AG04449 (cell line): ENCODE measurements at regions of chr2 and their contacts with region 1.

Region 1: DNA sequence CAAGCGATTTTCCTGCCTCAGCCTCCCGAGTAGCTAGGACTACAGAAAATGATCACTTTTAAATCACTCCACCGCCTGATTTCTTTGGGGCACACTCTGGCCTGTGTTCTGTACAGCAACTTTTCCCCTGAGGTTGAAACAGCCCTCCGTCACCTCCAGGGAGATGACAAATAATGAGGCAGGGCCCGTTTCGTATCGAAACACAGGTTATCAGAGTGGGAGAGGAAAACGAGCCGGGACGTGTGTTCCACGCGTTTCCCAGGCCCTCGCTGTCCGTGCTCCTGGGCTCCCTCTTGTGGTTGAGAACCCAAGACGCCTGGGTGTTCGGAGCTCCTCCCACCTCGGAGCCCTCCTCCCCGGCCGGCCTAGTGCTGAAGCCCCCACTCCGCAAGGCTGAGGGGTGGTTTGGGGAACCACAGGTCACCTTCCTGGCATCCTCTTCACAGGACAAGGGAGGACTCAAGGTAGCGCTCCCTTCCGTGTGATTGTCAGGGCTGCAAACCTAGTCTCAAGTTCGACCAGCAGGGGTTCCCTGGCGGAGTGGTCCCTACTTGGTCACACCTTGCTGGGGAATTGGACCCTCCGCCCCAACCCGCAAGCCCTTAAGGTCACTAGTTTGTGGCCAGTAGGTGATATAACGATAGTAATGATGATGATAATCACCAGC is 12.8 kb downstream of the ATP6V1B1 start:
- DNase-seq: no peak
- H3K4me3 ChIP-seq: peak overlapping the region; percentile 48
- CTCF ChIP-seq: peak; percentile 92

Region 2: GRCh38 chr2:70861777-70862625 is 86.5 kb before region 1 on chr2:
- CTCF ChIA-PET with region 1: interaction called, 299 read pairs
- POLR2A ChIA-PET with region 1: no interaction called
- DNase-seq: no peak
- H3K4me3 ChIP-seq: no peak overlapping the region
- CTCF ChIP-seq: peak; percentile 98

Region 3: DNA sequence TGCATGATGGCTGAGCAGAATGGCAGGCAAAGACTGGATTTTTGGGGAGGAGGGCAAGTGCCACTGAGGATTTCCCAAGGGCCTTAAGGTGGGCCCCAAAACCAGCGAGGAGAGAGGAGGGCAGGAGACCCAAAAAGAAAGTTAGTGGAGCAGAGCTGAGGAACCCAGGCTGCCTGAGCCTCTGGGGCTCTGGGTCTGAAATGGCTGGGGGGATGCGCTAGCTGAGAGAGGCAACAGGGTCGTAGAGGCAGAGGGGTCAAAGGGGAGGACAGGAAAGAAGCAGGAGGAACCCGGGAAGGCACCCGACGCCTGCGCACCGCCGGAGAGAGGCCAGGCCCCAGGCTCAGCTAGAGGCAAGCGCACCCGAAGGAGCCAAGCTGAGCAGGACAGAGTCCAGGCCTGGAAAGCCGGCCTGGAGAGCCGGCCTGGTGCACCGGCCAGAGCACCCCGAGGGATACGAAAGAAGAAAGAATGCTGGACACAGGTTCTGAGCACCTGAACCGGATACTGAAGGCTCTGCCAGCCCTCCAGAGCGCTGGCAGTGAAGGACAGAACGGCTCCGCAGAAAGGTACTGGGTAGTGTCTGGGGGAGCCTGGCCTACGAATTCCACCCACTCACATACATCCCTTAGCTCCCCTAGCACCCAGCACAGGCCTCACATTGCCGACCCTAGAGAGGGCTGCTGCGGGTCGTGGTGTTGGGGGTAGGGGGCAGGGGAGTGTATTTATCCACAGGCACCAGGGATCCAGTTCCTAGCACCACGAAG is 52.3 kb before region 1 on chr2:
- CTCF ChIA-PET with region 1: interaction called, 10 read pairs
- POLR2A ChIA-PET with region 1: interaction called, 3 read pairs
- DNase-seq: no peak
- H3K4me3 ChIP-seq: no peak overlapping the region
- CTCF ChIP-seq: no peak

Region 4: DNA sequence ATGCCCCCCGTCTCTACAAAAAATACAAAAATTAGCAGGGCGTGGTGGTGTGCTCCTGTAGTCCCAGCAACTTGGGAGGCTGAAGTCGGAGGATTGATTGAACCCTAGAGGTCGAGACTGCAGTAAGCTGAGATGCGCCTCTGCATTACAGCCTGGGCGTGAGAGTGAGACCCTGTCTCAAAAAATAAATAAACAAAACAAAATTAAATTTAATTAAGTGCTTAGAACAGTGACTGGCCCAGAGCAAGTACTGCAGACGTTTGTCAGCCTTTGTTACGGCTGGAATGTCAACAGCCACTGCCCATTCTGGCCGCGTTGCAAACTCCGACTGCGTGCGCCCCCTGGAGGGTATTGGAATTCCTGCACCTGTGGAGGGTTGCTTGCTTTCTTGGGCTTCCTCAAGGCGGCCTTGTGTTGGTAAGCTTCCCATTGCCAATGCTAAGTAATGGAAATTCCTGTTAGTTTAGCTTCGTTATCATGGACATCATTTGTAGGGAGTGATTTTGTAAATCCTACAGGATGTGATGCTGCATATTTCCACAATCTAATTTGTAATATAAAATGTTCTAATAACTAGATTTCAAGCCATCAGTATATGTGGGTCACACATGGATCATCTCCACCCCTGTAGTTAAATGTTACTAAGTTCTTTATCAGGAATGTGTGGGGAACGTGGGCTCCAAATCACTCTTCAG is 28.7 kb before region 1 on chr2:
- CTCF ChIA-PET with region 1: interaction called, 64 read pairs
- POLR2A ChIA-PET with region 1: no interaction called
- DNase-seq: no peak
- H3K4me3 ChIP-seq: no peak overlapping the region
- CTCF ChIP-seq: peak; percentile 94

Region 5: GRCh38 chr2:70935468-70936164 is 12.9 kb before region 1 on chr2 and contains the start of gene ATP6V1B1:
- CTCF ChIA-PET with region 1: interaction called, 72 read pairs
- POLR2A ChIA-PET with region 1: no interaction called
- DNase-seq: no peak
- H3K4me3 ChIP-seq: no peak within 1 kb of the TSS
- CTCF ChIP-seq: no peak

Region 6: GRCh38 chr2:70964596-70965386 is 16.3 kb after region 1 on chr2:
- CTCF ChIA-PET with region 1: interaction called, 91 read pairs
- POLR2A ChIA-PET with region 1: no interaction called
- DNase-seq: no peak
- H3K4me3 ChIP-seq: peak overlapping the region; percentile 60
- CTCF ChIP-seq: peak; percentile 89

Region 7: DNA sequence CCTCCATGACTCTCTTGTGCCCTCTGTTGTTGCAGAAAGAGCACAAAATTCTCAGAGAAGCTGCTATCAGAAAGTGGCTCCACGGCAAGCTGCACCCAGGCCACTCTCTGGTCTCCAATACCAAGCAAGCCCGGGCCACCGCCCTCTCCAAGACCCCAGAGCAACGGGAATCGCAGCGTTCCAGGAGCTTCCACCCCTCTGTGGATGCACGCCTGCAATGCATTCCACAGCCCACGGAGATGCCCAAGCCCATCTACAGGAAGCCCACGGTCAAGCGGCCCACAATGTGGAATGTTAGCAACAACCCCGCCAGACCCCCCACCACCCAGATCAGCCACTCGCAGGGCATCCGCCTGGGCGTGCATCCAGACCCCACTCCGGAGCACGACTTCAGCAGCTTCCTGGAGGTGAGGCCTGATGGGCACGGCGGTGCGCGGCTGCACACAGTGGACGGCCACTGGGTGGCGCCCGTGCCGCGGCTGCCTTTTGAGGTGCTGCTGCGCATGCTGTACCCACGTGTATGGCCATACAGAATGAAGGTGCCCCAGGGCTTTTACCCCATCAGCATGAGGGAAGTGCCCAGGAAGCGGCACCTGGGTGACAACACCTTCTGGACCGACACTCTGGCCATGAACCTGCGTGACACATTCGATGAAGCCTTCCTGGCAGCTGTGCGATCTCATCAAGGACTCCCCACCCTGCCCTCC is 36.3 kb after region 1 on chr2:
- CTCF ChIA-PET with region 1: interaction called, 10 read pairs
- POLR2A ChIA-PET with region 1: no interaction called
- DNase-seq: no peak
- H3K4me3 ChIP-seq: no peak overlapping the region
- CTCF ChIP-seq: peak; percentile 90